ENCODE measurements at regions of chr6 and their contacts with region 1.

Region 1: GRCh38 chr6:168355716-168356449 is 36.3 kb upstream of the DACT2 start:
- DNase-seq: peak; percentile 84
- H3K4me3 ChIP-seq: no peak overlapping the region
- H3K27ac ChIP-seq: no peak overlapping the region
- H3K4me1 ChIP-seq: peaks cover 4% of the 10 kb centered on the region
- H3K27me3 ChIP-seq: no peaks in the 10 kb centered on the region
- CTCF ChIP-seq: peak; percentile 87

Region 2: DNA sequence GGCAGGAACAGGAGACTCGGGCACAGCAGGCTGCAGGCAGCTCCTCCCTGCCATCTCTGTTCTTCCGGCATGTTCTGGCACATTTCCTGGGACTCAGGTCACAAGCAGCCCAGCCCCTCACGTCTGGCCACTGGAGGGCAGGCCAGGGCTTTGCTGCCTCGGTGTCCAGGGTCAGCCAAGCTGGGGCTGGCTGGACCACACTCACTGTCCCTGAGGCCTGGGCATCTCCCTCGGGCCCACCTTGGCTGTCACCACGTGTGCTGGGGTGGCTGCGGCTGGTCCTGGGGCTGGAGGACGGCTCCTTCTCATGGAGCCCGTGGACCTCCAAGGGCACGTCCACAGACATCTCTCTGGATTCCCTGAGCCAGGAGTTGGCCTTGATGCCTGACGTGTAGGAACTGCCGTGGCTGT is 295.4 kb before region 1 on chr6:
- CTCF ChIA-PET with region 1: no interaction called
- POLR2A ChIA-PET with region 1: no interaction called
- intact Hi-C with region 1: loop called (anchors 2 kb)
- DNase-seq: peak; percentile 49
- H3K4me3 ChIP-seq: no peak overlapping the region
- H3K27ac ChIP-seq: no peak overlapping the region
- H3K4me1 ChIP-seq: no peaks in the 10 kb centered on the region
- H3K27me3 ChIP-seq: no peaks in the 10 kb centered on the region
- CTCF ChIP-seq: peak; percentile 48

Region 3: DNA sequence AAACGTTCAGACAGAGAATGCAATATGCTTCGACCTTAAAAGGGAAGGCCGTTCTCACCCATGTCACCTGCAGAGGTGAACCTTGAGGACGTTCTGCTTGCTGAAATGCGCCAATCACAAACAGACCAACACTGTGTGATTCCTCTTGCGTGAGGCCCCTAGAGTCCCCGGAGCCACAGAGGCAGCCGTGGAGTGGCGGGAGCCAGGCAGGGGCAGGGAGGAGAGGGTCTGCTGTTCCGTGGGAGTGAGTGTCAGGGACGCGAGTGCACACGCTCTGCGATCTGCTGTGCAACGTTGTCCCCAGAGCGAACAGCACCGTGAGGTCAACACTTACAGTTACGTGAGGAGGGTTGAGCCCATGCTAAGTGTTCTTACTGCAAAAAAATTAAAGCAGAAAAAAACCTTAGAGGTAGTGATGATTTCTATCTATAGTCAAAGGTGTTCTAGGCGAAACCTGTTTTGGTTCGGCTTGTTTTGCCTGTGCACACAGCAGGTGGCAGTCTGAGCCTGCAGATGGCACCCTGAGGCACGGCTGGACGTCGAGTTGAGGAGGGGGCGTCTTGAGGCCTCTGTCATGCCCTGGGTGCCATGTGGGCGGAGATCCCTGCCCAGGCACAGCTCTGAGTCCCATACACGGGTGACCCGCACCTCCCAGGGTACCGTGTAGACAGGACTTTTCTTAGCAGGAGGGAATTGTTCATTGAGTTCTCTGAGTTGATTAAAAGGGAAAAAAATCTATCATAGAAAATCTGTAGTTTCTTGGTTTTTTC is 205.1 kb before region 1 on chr6:
- CTCF ChIA-PET with region 1: no interaction called
- POLR2A ChIA-PET with region 1: no interaction called
- intact Hi-C with region 1: loop called (anchors 2 kb)
- DNase-seq: peak; percentile 35
- H3K4me3 ChIP-seq: no peak overlapping the region
- H3K27ac ChIP-seq: no peak overlapping the region
- H3K4me1 ChIP-seq: peaks cover 32% of the 10 kb centered on the region
- H3K27me3 ChIP-seq: no peaks in the 10 kb centered on the region
- CTCF ChIP-seq: peak; percentile 65

Region 4: DNA sequence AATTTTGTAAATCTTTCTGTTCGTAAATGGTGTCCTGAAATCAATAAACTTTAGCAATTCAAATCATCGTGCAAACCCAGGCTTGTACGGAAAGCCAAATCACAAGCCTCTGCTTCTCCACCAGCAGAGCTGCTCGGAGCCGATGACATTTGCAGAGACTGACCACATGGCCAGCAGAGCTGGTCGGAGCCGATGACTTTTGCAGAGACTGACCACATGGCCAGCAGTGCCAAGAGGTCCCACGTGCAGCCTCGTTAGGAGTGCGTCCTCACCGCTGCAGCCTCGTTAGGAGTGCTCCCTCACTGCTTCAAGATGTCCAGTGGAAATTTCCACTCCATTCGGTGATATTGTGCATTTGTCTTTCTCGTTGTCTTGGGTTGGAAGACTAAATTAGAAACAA is 113.6 kb after region 1 on chr6:
- CTCF ChIA-PET with region 1: no interaction called
- POLR2A ChIA-PET with region 1: no interaction called
- intact Hi-C with region 1: no loop called
- DNase-seq: no peak
- H3K4me3 ChIP-seq: no peak overlapping the region
- H3K27ac ChIP-seq: no peak overlapping the region
- H3K4me1 ChIP-seq: no peaks in the 10 kb centered on the region
- H3K27me3 ChIP-seq: peaks cover 3% of the 10 kb centered on the region
- CTCF ChIP-seq: no peak

Measured in A673 (cell line).